Activated CD4-positive, alpha-beta memory T cell treated with anti-CD3 and anti-CD28 coated beads, Interleukin-2, amount 10 ng/mL, durations not matched to agents 7 days and 5 days (primary cell): ENCODE measurements at regions of chr3 and their contacts with region 1.

Region 1: DNA sequence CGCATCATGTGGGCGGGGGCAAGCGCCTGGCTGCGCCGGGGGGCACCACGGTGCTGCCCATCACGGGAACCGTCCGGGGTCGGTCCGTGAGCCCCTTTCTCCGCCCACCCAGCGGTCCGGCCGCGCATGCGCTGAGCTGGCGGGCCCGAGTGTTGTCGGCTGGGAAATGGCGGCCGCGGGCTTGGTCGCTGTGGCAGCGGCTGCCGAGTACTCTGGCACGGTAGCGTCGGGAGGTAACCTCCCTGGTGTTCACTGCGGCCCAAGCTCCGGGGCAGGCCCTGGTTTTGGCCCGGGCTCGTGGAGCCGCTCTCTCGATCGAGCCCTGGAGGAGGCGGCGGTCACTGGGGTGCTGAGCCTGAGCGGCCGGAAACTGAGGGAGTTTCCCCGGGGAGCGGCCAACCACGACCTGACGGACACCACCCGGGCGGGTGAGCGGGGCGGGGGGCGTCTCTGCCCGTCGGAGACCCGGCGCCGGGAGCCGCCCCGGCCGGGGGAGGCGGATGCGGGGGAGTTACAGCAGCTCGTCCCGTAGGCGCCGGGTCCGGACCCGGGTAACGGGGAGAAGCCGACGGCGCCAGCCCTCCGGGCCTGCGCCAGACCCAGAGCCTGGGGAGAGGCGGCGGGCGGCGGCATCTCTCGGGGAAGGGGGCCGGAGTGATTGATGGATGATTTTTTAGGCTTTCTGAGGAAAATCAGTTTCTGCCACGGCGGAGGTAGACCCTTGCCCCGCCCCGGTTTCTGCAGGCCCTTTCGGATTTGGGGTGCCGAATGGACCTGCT is at the start of gene LRCH3:
- DNase-seq: peak; percentile 85
- H3K4me3 Mint-ChIP-seq: peak within 1 kb of the TSS; percentile 92
- H3K27ac Mint-ChIP-seq: peak within 1 kb of the TSS; percentile 97
- H3K4me1 Mint-ChIP-seq: peaks cover 32% of the 10 kb centered on the region
- H3K27me3 Mint-ChIP-seq: no peaks in the 10 kb centered on the region
- total RNA-seq, gene LRCH3: 58.5 to 65.8 TPM

Region 2: DNA sequence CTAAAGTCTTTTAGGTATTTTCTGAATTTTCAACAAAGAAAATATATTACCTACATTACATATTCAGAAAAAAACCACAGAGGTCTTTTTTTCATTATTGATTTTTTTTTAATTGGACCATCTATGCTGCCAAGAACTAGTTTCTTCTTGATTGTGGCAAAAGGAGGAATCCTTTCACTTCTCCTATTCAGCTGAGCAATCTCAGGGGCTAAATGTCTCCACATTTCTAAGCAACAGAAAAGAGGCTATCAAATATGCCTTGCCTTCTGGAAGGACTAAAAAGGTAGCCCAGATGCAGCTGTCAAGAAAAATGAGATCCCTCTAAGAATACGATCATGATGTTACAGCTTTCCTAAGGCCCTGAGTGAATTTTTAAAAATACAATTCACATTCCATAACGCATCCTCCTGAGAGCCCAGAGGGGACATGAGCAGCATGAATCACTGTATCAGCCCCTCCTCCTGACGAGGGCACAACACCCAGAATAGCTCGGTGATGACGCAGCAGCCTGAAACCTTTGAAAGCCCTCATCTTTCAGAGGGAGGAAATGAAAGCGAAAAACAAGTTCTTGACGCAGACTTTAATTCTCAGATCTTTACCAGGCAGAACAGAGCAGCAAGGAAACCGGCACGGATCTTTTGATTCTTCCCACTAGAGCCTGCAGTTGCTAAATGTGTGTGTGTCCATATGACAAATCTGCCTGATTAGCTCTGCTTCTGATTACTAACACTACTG is 79.2 kb before region 1 on chr3:
- CTCF ChIA-PET with region 1: no interaction called
- POLR2A ChIA-PET with region 1: interaction called, 17 read pairs
- DNase-seq: peak; percentile 90
- H3K4me3 Mint-ChIP-seq: peak overlapping the region; percentile 74
- H3K27ac Mint-ChIP-seq: peak overlapping the region; percentile 98
- H3K4me1 Mint-ChIP-seq: peaks cover 41% of the 10 kb centered on the region
- H3K27me3 Mint-ChIP-seq: no peaks in the 10 kb centered on the region

Region 3: DNA sequence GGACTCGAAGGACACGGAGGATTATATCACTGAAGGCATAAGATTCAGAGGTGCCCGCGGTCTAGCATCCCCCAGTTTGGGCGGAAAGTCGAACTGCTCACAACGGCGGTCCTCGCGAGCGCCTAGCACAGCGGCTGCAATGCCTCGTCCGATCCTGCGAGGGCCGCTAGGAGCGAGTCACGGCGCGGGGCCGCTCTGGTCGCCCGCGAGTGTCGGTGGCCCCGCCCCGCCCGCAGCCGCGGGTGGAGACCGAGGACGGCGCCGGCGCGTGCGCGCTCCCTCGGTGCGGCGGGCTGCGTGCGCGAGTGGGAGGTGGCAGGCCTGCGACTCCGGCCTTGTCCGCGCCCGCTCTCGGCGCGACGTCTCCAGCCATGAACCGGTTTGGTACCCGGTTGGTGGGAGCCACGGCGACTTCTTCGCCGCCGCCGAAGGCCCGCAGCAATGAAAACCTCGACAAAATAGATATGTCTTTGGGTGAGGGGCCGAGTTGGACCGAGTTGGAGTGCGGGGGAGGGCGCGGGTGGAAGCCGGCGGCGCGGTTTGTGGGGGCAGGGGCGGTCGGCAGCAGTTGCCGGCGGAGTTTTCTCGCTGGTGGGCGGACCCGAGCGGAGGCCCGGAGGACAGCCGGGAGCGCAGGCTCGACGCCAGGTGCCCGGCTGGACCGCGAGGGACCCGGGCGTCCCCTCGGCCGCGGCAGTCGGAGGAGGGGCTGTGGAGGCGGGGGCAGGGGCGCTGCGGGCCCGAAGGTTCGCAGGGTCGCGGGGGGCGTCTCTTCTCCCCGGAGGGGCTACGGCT is 41.5 kb before region 1 on chr3 and contains the start of gene FYTTD1:
- CTCF ChIA-PET with region 1: interaction called, 5 read pairs
- POLR2A ChIA-PET with region 1: interaction called, 24 read pairs
- DNase-seq: peak; percentile 87
- H3K4me3 Mint-ChIP-seq: peak within 1 kb of the TSS; percentile 94
- H3K27ac Mint-ChIP-seq: peak within 1 kb of the TSS; percentile 84
- H3K4me1 Mint-ChIP-seq: peaks cover 35% of the 10 kb centered on the region
- H3K27me3 Mint-ChIP-seq: no peaks in the 10 kb centered on the region
- total RNA-seq, gene FYTTD1: 41.7 to 45.1 TPM

Region 4: GRCh38 chr3:197801891-197802778 is 10.8 kb after region 1 on chr3:
- CTCF ChIA-PET with region 1: interaction called, 7 read pairs
- POLR2A ChIA-PET with region 1: interaction called, 19 read pairs
- DNase-seq: peak; percentile 45
- H3K4me3 Mint-ChIP-seq: no peak overlapping the region
- H3K27ac Mint-ChIP-seq: peak overlapping the region; percentile 63
- H3K4me1 Mint-ChIP-seq: peaks cover 44% of the 10 kb centered on the region
- H3K27me3 Mint-ChIP-seq: no peaks in the 10 kb centered on the region

Region 5: GRCh38 chr3:197847866-197848401 is 56.6 kb after region 1 on chr3:
- CTCF ChIA-PET with region 1: interaction called, 3 read pairs
- POLR2A ChIA-PET with region 1: interaction called, 15 read pairs
- DNase-seq: peak; percentile 39
- H3K4me3 Mint-ChIP-seq: peak overlapping the region; percentile 65
- H3K27ac Mint-ChIP-seq: peak overlapping the region; percentile 85
- H3K4me1 Mint-ChIP-seq: peaks cover 24% of the 10 kb centered on the region
- H3K27me3 Mint-ChIP-seq: no peaks in the 10 kb centered on the region